IMR-90 (cell line): ENCODE measurements at regions of chr1 and their contacts with region 1.

Region 1: DNA sequence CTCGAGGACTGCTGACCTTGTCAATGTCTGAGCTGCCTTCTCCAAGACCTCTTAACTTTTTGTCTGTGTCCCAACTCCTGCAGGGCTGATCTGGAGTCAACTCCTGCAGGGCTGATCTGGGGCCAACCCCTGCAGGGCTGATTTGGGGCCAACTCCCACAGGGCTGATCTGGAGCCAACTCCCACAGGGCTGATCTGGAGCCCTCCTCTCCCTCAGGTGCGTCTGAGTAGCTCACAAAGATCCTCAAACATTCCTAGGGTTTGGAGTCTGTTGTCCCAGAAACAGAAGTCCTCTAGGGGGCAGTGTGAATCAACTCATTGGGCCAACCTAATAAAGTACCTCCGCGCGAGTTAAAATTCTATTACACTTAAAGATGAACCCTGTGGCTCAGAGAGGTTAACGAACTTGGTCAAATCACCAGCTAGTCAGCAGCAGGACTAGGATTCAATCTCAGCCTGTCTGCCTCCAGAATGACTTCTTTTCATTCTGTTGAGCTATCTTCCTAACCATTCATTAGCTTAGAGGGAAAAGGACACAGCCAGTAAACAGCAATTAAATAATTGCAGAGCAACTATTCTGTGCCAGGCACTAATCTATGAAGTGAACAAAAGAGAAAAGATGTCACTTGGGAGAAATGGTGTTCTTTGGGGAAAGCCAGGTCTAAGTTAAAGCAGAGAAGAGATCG is 17.2 kb upstream of the RLF start:
- DNase-seq: peak; percentile 66
- ATAC-seq: peak; percentile 85
- H3K4me3 ChIP-seq: no peak overlapping the region
- H3K27ac ChIP-seq: no peak overlapping the region
- H3K4me1 ChIP-seq: no peaks in the 10 kb centered on the region
- H3K27me3 ChIP-seq: peaks cover 30% of the 10 kb centered on the region
- CTCF ChIP-seq: peak; percentile 82
- POLR2A ChIP-seq: no peak
- RAD21 ChIP-seq: peak; percentile 82

Region 2: GRCh38 chr1:40096977-40097782 is 46.9 kb before region 1 on chr1 and contains the start of gene PPT1:
- CTCF ChIA-PET with region 1: no interaction called
- POLR2A ChIA-PET with region 1: no interaction called
- dilution Hi-C with region 1: no loop called
- in situ Hi-C with region 1: no loop called
- intact Hi-C with region 1: loop called (anchors 5 kb)
- DNase-seq: peak; percentile 55
- ATAC-seq: peak; percentile 95
- H3K4me3 ChIP-seq: peak within 1 kb of the TSS; percentile 83
- H3K27ac ChIP-seq: peak within 1 kb of the TSS; percentile 69
- H3K4me1 ChIP-seq: peaks cover 2% of the 10 kb centered on the region; the same call in 1 of the 2 replicates
- H3K27me3 ChIP-seq: no peaks in the 10 kb centered on the region
- CTCF ChIP-seq: peak; percentile 21; the same call in 1 of the 2 replicates
- POLR2A ChIP-seq: peak; percentile 43; the same call in 1 of the 2 replicates
- RAD21 ChIP-seq: no peak
- total RNA-seq, gene PPT1: 41.4 and 55.4 TPM in 2 replicates

Region 3: DNA sequence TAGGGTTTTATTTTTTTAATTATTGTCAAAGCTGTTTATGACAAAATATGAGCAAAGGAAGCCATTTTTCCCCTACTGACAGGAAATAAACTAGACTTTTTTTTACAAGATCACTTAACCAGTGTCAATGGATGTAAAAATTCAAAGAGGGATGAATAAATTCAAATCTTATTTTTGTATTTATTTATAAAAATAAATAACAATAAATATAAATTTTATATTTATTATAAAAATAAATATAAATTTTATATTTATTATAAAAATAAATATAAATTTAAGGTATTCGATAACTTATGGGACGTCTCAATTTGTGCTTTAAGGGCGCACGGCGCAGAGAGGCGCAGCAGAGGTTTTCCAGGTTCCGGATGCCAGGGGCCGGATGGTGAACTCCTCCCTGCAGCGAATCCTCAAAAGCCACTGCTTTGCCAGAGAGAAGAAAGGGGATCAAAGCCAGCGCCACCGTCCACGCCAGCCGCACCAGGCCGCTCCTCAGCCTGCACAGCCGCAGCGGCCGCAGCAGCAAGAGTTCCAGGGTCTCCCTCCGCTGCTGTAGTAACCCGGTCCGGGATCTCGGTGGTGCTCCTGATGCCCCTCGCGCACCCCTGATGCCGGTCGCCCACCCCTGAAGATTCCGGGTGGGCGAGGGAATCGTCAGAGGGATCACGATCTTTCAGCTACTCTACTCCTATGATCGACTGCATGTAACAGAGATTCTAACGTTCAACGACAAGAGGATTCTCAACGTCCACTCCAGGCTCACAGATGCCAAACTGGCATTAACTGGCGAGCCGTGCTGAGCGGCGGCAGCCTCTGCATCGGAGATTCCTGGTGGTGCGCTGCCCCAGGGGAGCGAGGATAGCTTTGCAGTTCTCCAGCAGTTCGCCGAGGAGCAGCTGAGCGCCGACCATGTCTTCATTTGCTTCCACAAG is 11.4 kb before region 1 on chr1:
- CTCF ChIA-PET with region 1: interaction called, 10 read pairs
- POLR2A ChIA-PET with region 1: no interaction called
- dilution Hi-C with region 1: no loop called
- in situ Hi-C with region 1: no loop called
- intact Hi-C with region 1: no loop called
- DNase-seq: peak; percentile 1
- ATAC-seq: peak; percentile 67
- H3K4me3 ChIP-seq: peak overlapping the region; percentile 26
- H3K27ac ChIP-seq: no peak overlapping the region
- H3K4me1 ChIP-seq: no peaks in the 10 kb centered on the region
- H3K27me3 ChIP-seq: peaks cover 18% of the 10 kb centered on the region
- CTCF ChIP-seq: no peak
- POLR2A ChIP-seq: no peak
- RAD21 ChIP-seq: no peak

Region 4: GRCh38 chr1:40315239-40315794 is 171.3 kb after region 1 on chr1:
- CTCF ChIA-PET with region 1: interaction called, 5 read pairs
- POLR2A ChIA-PET with region 1: no interaction called
- dilution Hi-C with region 1: no loop called
- in situ Hi-C with region 1: no loop called
- intact Hi-C with region 1: loop called (anchors 5 kb)
- DNase-seq: peak; percentile 83
- ATAC-seq: peak; percentile 97
- H3K4me3 ChIP-seq: peak overlapping the region; percentile 28; the same call in 1 of the 2 replicates
- H3K27ac ChIP-seq: peak overlapping the region; percentile 79
- H3K4me1 ChIP-seq: peaks cover 13% of the 10 kb centered on the region; the same call in 1 of the 2 replicates
- H3K27me3 ChIP-seq: peaks cover 37% of the 10 kb centered on the region
- CTCF ChIP-seq: peak; percentile 88
- POLR2A ChIP-seq: no peak
- RAD21 ChIP-seq: peak; percentile 71